Breast epithelium (tissue), 4 donors: ENCODE measurements at regions of chr6 and their contacts with region 1.

Region 1: GRCh38 chr6:42322676-42323075 is 105.0 kb upstream of the MRPS10 start:
- DNase-seq: no peak
- H3K4me3 ChIP-seq: no peak overlapping the region
- H3K27ac ChIP-seq: no peak overlapping the region
- H3K4me1 ChIP-seq: no peaks in the 10 kb centered on the region
- H3K27me3 ChIP-seq: no peaks in the 10 kb centered on the region
- CTCF ChIP-seq: no peak
- POLR2A ChIP-seq: no peak

Region 2: GRCh38 chr6:41059556-41059955 is 1263.1 kb before region 1 on chr6:
- intact Hi-C with region 1: no loop called
- DNase-seq: no peak
- H3K4me3 ChIP-seq: no peak overlapping the region
- H3K27ac ChIP-seq: no peak overlapping the region
- H3K4me1 ChIP-seq: no peaks in the 10 kb centered on the region
- H3K27me3 ChIP-seq: no peaks in the 10 kb centered on the region
- CTCF ChIP-seq: no peak
- POLR2A ChIP-seq: no peak

Region 3: GRCh38 chr6:42505377-42505702 is 182.7 kb after region 1 on chr6:
- intact Hi-C with region 1: loop called (anchors 10 kb)
- DNase-seq: no peak
- H3K4me3 ChIP-seq: no peak overlapping the region
- H3K27ac ChIP-seq: no peak overlapping the region
- H3K4me1 ChIP-seq: no peaks in the 10 kb centered on the region
- H3K27me3 ChIP-seq: no peaks in the 10 kb centered on the region
- CTCF ChIP-seq: no peak
- POLR2A ChIP-seq: no peak